HAP-1 (cell line): ENCODE measurements at regions of chr18 and their contacts with region 1.

Region 1: GRCh38 chr18:3703732-3704176 is 253.8 kb downstream of the TGIF1 start:
- DNase-seq: peak; percentile 62 to 78
- H3K4me3 ChIP-seq: no peak overlapping the region
- H3K4me1 ChIP-seq: 0 out of 2 replicates have a peak, but pooled peaks cover 2% of the 10 kb centered on the region
- H3K27me3 ChIP-seq: no peaks in the 10 kb centered on the region

Region 2: GRCh38 chr18:3869848-3870247 is 166.1 kb after region 1 on chr18:
- in situ Hi-C with region 1: loop called (anchors 10 kb)
- DNase-seq: peak in 1 of 2 experiments; percentile 25
- H3K4me3 ChIP-seq: no peak overlapping the region
- H3K4me1 ChIP-seq: no peaks in the 10 kb centered on the region
- H3K27me3 ChIP-seq: no peaks in the 10 kb centered on the region

Region 3: DNA sequence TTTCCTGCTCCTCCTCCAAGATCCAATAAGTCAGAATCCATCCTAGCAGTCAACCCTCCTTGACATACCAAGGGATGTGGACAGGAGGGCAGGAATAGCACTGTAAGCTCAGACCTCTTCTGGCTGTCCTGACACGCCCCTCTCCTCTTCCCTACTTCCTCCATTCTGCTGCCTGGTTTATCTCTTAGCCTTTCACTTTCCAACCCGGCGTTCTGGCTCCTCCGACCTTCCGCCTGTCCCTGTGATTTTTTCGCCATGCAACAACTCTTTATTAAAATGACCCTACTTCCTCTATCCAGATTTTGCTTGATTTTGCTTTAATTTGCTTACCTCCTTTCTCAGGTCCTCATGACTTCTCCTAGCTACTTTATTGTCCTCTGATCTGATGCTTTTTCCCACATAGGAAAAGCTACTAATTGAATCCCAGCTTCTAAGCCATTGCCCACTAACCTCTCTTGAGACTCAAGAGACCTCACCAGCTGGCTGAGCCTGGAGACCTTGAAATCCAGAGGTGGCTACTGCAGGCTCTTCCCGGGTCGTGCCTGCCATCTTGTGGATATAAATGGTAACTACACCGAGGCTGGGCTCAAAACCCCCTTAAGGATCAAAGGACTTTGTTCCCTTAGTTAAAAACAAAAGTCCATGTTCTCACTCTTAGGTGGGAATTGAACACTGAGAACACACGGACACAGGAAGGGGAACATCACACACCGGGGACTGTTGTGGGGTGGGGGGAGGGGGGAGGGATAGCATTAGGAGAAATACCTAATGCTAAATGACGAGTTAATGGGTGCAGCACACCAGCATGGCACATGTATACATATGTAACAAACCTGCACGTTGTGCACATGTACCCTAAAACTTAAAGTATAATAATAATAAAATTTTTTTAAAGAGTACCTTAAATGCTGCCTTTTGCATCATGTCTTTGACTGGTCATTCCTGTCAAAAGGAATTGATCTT is 1353.9 kb after region 1 on chr18:
- in situ Hi-C with region 1: loop called (anchors 25 kb)
- DNase-seq: peak; percentile 66 to 79
- H3K4me3 ChIP-seq: no peak overlapping the region
- H3K4me1 ChIP-seq: no peaks in the 10 kb centered on the region
- H3K27me3 ChIP-seq: no peaks in the 10 kb centered on the region